CD14-positive monocyte (primary cell): ENCODE measurements at regions of chr15 and their contacts with region 1.

Region 1: DNA sequence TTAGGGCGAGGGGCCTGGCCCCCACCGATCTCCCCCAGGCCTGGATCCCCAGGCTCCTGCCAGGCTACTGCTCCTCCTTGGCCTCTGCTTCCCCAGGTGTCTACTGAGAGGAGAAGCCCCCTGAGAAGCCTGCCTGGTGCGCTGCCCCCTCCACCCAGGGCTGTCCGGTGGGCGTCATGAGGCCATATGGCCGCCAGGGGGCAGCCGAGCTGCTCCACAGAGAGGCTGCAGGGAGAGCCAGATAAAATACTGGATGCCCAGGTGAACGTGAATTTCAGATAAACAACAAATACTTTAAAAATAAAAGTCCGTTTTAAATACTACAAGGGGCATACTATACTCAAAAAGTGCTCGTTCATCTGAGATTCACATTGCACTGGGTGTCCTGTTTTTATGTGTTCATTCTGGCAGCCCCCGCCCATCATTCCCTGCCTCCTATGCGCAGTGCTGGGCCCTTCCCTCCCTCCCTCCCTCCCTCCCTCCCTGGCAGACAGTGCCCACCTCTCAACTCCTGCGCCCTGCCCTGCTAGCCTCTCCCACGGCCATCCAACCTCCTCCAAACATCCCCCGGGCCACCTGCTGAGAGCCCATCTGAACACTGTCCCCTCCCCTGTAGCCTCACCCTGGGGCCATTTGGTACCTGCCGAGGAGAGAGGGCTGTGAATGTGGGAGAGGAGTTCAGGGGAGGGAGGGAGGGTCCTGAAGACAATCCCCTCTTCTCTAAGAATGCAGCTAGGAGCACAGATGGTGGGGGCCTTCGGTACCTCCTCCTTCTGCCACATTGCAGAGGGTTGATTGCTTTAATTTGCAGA is 29.6 kb downstream of the PSTPIP1 start:
- DNase-seq: peak in 2 of 3 donors; percentile 35 to 36
- H3K4me3 ChIP-seq: no peak overlapping the region
- H3K4me3 Mint-ChIP-seq: no peak overlapping the region
- H3K27ac ChIP-seq: peak overlapping the region in 1 of 2 donors; percentile 68
- H3K27ac Mint-ChIP-seq: peak overlapping the region in 2 of 7 donors; percentile 72 to 73
- H3K4me1 ChIP-seq: peaks cover 8 to 17% of the 10 kb centered on the region in 2 donors
- H3K4me1 Mint-ChIP-seq: peaks cover 33% of the 10 kb centered on the region
- H3K27me3 ChIP-seq: no peaks in the 10 kb centered on the region
- H3K27me3 Mint-ChIP-seq: no peaks in the 10 kb centered on the region
- CTCF ChIP-seq: peak; percentile 98

Region 2: DNA sequence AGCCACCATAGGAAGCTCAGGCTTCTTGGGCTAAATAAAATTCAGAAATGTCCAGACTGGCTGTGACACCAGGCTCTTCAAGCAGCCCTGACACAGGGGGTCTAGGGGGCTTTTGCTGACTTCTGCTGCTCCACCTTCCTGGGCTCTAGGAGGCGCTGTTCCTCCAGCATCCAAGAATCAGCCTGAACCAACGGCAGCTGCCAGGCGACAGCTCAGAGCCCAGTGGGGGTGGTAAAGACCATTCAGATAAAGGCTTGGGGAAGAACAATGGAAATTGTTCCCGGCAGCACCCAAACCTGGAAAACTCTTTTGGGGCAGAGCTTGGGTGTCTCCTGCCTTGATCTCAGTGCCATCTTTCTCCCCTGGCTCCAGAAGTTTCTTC is 51.1 kb before region 1 on chr15:
- intact Hi-C with region 1: loop called (anchors 5 kb)
- DNase-seq: peak; percentile 50 to 72 (median 63)
- H3K4me3 ChIP-seq: no peak overlapping the region
- H3K4me3 Mint-ChIP-seq: no peak overlapping the region
- H3K27ac ChIP-seq: no peak overlapping the region
- H3K27ac Mint-ChIP-seq: peak overlapping the region in 1 of 7 donors; percentile 25
- H3K4me1 ChIP-seq: peaks cover 23 to 24% of the 10 kb centered on the region in 2 donors
- H3K4me1 Mint-ChIP-seq: peaks cover 21% of the 10 kb centered on the region
- H3K27me3 ChIP-seq: no peaks in the 10 kb centered on the region
- H3K27me3 Mint-ChIP-seq: peaks cover 0 to 2% (median 1%) of the 10 kb centered on the region in 3 donors
- CTCF ChIP-seq: peak; percentile 97

Region 3: GRCh38 chr15:78968539-78969271 is 1944.2 kb after region 1 on chr15:
- intact Hi-C with region 1: no loop called
- DNase-seq: no peak
- H3K4me3 ChIP-seq: no peak overlapping the region
- H3K4me3 Mint-ChIP-seq: no peak overlapping the region
- H3K27ac ChIP-seq: no peak overlapping the region
- H3K27ac Mint-ChIP-seq: no peak overlapping the region
- H3K4me1 ChIP-seq: no peaks in the 10 kb centered on the region
- H3K4me1 Mint-ChIP-seq: no peaks in the 10 kb centered on the region
- H3K27me3 ChIP-seq: no peaks in the 10 kb centered on the region
- H3K27me3 Mint-ChIP-seq: peaks cover 0 to 1% (median 0%) of the 10 kb centered on the region in 3 donors
- CTCF ChIP-seq: no peak